ENCODE measurements at regions of chr14 and their contacts with region 1.

Region 1: DNA sequence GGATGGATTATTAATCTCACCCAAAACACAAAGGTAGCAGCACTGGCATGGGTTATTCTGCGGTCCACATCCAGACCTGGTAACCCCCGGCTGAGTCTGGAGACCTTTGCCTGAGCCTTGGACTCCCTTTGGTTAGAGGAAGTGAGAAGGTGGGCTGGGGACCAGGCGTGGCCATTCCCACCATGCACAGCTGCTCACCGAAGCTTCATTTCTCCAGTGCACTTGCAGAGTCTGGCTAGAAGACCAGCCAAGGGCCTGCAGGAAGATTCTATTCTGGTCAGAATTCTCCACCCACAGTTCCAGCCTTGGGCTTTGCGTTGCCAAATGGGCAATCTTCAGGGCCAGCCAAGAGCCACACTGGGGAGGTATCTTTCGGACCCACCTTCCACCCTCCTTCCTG is 73.0 kb downstream of the LGMN start:
- DNase-seq: no peak
- ATAC-seq: no peak
- H3K4me3 ChIP-seq: no peak overlapping the region
- H3K4me3 Mint-ChIP-seq: peak overlapping the region in 1 of 3 donors; percentile 9
- H3K27ac ChIP-seq: peak overlapping the region; percentile 28
- H3K27ac Mint-ChIP-seq: peak overlapping the region; percentile 77 to 86
- H3K4me1 ChIP-seq: peaks cover 2 to 31% of the 10 kb centered on the region in 2 experiments
- H3K4me1 Mint-ChIP-seq: peaks cover 48 to 68% (median 60%) of the 10 kb centered on the region in 3 donors
- H3K27me3 ChIP-seq: no peaks in the 10 kb centered on the region
- H3K27me3 Mint-ChIP-seq: no peaks in the 10 kb centered on the region

Region 2: DNA sequence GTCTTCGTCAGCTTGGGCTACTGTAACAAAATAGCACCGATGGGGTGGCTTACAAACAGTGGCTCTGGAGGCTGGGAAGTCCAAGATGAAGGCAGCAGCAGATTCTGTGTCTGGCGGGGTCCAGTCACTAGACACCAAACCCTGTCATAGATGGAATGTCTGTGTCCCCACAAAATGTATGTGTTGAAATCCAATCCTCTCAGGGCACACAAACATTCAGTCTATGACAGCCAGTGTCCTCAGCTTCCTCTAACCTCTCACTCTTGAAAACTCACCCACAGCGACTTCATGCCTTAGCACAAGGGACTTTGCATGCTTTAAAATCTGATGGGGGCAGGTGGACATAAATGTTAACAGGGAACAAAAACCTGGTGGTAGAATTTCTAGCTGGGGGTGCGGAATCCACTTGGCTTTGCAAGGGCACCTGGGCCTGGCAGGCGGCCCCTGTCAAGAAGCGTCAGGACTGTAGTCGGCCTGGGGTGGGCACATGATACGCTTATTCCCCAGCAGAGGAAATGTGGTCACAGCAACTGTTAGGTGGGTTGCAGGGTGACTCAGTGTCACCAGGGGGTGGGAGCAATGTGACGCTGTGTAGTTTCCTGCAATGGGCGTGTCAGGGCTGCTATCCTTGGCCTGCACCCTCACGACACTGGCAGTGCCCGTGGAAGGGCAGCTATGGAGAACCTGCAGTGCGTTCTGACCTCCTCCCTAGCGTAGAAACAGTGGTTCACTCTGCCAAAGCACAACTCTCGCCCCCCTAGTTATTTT is 144.1 kb before region 1 on chr14:
- CTCF ChIA-PET with region 1: no interaction called
- POLR2A ChIA-PET with region 1: no interaction called
- DNase-seq: peak; percentile 42 to 88 (median 72)
- ATAC-seq: peak; percentile 85 to 90 (median 86)
- H3K4me3 ChIP-seq: no peak overlapping the region
- H3K4me3 Mint-ChIP-seq: peak overlapping the region in 2 of 3 donors; percentile 47 to 63
- H3K27ac ChIP-seq: peak overlapping the region; percentile 77
- H3K27ac Mint-ChIP-seq: peak overlapping the region; percentile 94 to 95
- H3K4me1 ChIP-seq: peaks cover 15 to 82% of the 10 kb centered on the region in 2 experiments
- H3K4me1 Mint-ChIP-seq: peaks cover 56 to 66% (median 60%) of the 10 kb centered on the region in 3 donors
- H3K27me3 ChIP-seq: no peaks in the 10 kb centered on the region
- H3K27me3 Mint-ChIP-seq: no peaks in the 10 kb centered on the region

Region 3: DNA sequence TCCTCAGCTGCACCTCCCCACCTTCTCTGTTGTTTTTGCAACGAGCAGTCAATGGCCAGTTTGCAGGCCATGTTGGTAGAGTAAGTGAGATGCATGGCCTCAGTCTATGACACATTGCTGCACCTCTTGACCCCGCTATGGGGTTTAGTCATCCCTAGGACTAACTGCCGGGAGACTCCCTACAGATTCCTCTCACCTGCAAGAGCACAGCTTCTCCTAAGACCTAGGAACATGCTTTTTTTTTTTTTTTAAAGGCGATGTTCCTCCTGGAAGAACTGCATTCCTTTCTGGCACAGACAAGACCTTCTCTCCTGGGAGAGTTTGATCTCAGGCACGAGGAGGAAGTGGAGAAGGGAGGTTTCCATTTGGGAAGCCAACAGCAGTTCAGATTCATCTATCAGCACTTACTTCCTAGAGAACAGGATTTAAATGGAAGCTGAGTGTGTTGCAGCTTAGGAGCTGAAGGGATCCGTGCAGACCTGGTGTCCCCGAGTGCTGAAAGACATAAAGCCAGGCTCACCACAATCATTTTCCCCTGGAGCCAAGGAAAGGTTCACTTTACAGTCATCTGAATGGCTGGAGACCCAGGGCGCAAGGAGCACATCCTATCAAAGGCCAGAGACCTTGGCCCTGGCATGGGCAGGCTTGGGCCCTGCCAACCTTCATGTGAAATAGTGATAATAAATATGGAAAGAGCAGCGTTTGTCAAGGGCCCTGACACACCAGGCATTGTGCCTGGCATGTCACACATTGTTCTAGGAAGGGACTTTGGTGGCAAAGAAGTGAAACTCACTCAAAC is 31.1 kb before region 1 on chr14:
- CTCF ChIA-PET with region 1: no interaction called
- POLR2A ChIA-PET with region 1: no interaction called
- DNase-seq: no peak
- ATAC-seq: no peak
- H3K4me3 ChIP-seq: no peak overlapping the region
- H3K4me3 Mint-ChIP-seq: no peak overlapping the region
- H3K27ac ChIP-seq: no peak overlapping the region
- H3K27ac Mint-ChIP-seq: peak overlapping the region; percentile 27 to 34
- H3K4me1 ChIP-seq: peaks cover 26 to 44% of the 10 kb centered on the region in 2 experiments
- H3K4me1 Mint-ChIP-seq: peaks cover 40 to 48% (median 43%) of the 10 kb centered on the region in 3 donors
- H3K27me3 ChIP-seq: peaks cover 0 to 2% of the 10 kb centered on the region in 2 experiments
- H3K27me3 Mint-ChIP-seq: no peaks in the 10 kb centered on the region

Region 4: DNA sequence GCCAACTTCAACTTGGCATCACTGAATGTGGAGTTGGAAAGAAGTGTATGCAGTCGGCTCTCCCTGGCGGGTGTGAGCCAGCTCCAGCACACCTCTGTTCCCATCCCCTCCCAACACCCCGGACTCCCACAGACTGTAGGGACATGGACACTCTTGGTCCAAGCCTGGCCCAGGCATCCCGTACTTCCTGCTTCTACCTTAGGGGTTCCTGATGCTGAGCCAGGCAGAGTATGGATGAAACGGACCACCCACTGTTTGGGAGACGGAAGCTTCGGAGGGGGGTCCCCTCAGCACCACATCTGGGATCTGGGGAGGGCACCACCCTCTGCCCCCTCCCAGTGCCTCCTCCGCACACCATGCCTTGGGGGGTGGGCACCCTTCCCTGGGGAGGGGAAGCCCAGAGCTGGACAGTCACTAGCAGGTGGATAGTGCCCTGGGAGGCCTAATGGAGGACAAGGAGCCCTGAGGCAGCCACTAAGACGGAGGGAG is 11.0 kb after region 1 on chr14:
- CTCF ChIA-PET with region 1: interaction called, 5 to 11 read pairs
- POLR2A ChIA-PET with region 1: interaction called in 1 of 2 experiments, 3 read pairs
- DNase-seq: no peak
- ATAC-seq: peak in 2 of 4 experiments; percentile 17 to 26
- H3K4me3 ChIP-seq: no peak overlapping the region
- H3K4me3 Mint-ChIP-seq: no peak overlapping the region
- H3K27ac ChIP-seq: no peak overlapping the region
- H3K27ac Mint-ChIP-seq: peak overlapping the region in 1 of 2 donors; percentile 64
- H3K4me1 ChIP-seq: peaks cover 0 to 2% of the 10 kb centered on the region in 2 experiments
- H3K4me1 Mint-ChIP-seq: peaks cover 1 to 4% (median 3%) of the 10 kb centered on the region in 3 donors
- H3K27me3 ChIP-seq: no peaks in the 10 kb centered on the region
- H3K27me3 Mint-ChIP-seq: no peaks in the 10 kb centered on the region